ENCODE measurements at regions of chr4 and their contacts with region 1.

Region 1: GRCh38 chr4:150010525-150011126 is 67.6 kb upstream of the DCLK2 start:
- DNase-seq: no peak
- H3K4me3 ChIP-seq: no peak overlapping the region
- H3K27ac ChIP-seq: no peak overlapping the region
- H3K4me1 ChIP-seq: no peaks in the 10 kb centered on the region
- H3K27me3 ChIP-seq: no peaks in the 10 kb centered on the region
- CTCF ChIP-seq: peak; percentile 44 to 64 (median 54)

Region 2: DNA sequence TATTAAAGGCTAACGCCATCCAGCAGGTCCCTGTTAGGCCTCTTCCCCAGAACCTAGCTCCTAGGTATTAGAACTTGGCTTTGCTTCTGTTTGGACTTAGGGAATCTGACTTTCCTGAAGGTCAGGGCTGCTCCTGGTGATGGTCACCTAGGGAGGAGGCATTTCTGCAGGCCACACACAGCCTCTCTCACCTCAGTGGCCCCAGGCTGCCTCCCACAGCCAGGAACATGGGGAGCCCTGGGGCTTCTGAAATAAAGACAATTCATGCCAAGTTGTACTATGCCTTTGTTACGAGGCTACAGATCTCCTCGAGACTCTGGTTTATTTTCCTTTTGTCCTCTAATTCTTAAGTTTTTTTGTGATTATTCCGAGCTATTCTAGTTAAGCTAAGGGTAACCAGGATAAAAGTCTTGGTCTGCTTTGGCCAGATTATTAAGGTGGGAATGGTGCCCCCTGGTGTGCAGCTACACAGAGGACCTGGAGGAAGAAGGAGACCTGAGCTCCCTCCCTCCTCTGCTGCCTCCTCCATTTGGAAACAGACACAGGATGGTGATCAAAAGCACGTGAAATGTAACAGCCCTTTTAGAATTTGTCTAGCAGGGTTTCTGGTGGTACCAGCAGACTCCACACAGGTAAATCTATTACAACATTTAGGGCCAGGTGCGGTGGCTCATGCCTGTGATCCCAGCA is 198.7 kb after region 1 on chr4:
- dilution Hi-C with region 1: loop called (anchors 25 kb)
- DNase-seq: no peak
- H3K4me3 ChIP-seq: no peak overlapping the region
- H3K27ac ChIP-seq: no peak overlapping the region
- H3K4me1 ChIP-seq: peaks cover 15% of the 10 kb centered on the region
- H3K27me3 ChIP-seq: no peaks in the 10 kb centered on the region
- CTCF ChIP-seq: peak; percentile 52 to 82 (median 65)

Measured in keratinocyte (primary cell).